ENCODE measurements at regions of chr2 and their contacts with region 1.

Region 1: GRCh38 chr2:37832590-37833197 is 92.4 kb upstream of the RMDN2 start:
- DNase-seq: peak; percentile 94
- H3K4me3 ChIP-seq: no peak overlapping the region
- H3K27ac ChIP-seq: peak overlapping the region in 3 of 4 donors; percentile 44 to 71 (median 59)
- H3K4me1 ChIP-seq: peaks cover 0 to 57% (median 31%) of the 10 kb centered on the region in 4 donors
- H3K27me3 ChIP-seq: no peaks in the 10 kb centered on the region
- CTCF ChIP-seq: peak; percentile 81 to 92 (median 88)
- EP300 ChIP-seq: no peak
- POLR2A ChIP-seq: no peak

Region 2: DNA sequence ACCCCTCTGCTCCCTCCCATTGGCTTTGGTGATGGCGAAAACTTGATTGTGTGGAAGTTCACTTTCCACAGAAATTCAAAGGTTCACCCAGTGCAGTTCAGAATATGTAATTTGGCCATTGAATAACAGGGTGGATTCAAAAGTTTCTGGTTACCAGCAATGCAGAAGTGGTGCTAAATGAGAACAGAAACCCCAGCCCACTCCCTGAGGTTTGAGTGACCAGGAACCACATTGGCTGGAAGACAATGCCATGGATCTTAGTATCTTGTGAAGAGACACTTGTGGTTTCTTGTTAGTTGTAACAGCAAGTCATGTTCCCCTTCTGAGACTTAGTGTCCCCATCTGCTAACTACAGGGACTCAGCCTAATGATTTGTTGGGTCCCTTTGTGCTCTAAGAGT is 438.4 kb before region 1 on chr2:
- intact Hi-C with region 1: loop called (anchors 5 kb)
- DNase-seq: no peak
- H3K4me3 ChIP-seq: no peak overlapping the region
- H3K27ac ChIP-seq: no peak overlapping the region
- H3K4me1 ChIP-seq: peaks cover 0 to 18% (median 12%) of the 10 kb centered on the region in 4 donors
- H3K27me3 ChIP-seq: no peaks in the 10 kb centered on the region
- CTCF ChIP-seq: no peak
- EP300 ChIP-seq: no peak
- POLR2A ChIP-seq: no peak

Region 3: GRCh38 chr2:37414470-37414949 is 418.2 kb before region 1 on chr2:
- intact Hi-C with region 1: loop called (anchors 1 kb)
- DNase-seq: peak; percentile 74
- H3K4me3 ChIP-seq: no peak overlapping the region
- H3K27ac ChIP-seq: peak overlapping the region; percentile 48 to 76 (median 62)
- H3K4me1 ChIP-seq: peaks cover 0 to 28% (median 22%) of the 10 kb centered on the region in 4 donors
- H3K27me3 ChIP-seq: no peaks in the 10 kb centered on the region
- CTCF ChIP-seq: peak; percentile 80 to 98 (median 96)
- EP300 ChIP-seq: no peak
- POLR2A ChIP-seq: no peak

Region 4: GRCh38 chr2:37523814-37524362 is 308.8 kb before region 1 on chr2:
- intact Hi-C with region 1: loop called (anchors 10 kb)
- DNase-seq: peak; percentile 86
- H3K4me3 ChIP-seq: no peak overlapping the region
- H3K27ac ChIP-seq: peak overlapping the region; percentile 74 to 83 (median 79)
- H3K4me1 ChIP-seq: peaks cover 0 to 55% (median 37%) of the 10 kb centered on the region in 4 donors
- H3K27me3 ChIP-seq: no peaks in the 10 kb centered on the region
- CTCF ChIP-seq: no peak
- EP300 ChIP-seq: peak in 2 of 4 donors; percentile 9 to 53
- POLR2A ChIP-seq: no peak

Measured in sigmoid colon (tissue), 7 donors.